Psoas muscle (tissue), 8 donors: ENCODE measurements at regions of chr1 and their contacts with region 1.

Region 1: GRCh38 chr1:19504796-19505692 is 19.7 kb upstream of the CAPZB start:
- DNase-seq: no peak
- ATAC-seq: peak in 3 of 4 donors; percentile 55 to 79 (median 64)
- H3K4me3 ChIP-seq: no peak overlapping the region
- H3K27ac ChIP-seq: peak overlapping the region; percentile 43
- H3K4me1 ChIP-seq: peaks cover 6% of the 10 kb centered on the region
- H3K27me3 ChIP-seq: no peaks in the 10 kb centered on the region
- CTCF ChIP-seq: no peak

Region 2: DNA sequence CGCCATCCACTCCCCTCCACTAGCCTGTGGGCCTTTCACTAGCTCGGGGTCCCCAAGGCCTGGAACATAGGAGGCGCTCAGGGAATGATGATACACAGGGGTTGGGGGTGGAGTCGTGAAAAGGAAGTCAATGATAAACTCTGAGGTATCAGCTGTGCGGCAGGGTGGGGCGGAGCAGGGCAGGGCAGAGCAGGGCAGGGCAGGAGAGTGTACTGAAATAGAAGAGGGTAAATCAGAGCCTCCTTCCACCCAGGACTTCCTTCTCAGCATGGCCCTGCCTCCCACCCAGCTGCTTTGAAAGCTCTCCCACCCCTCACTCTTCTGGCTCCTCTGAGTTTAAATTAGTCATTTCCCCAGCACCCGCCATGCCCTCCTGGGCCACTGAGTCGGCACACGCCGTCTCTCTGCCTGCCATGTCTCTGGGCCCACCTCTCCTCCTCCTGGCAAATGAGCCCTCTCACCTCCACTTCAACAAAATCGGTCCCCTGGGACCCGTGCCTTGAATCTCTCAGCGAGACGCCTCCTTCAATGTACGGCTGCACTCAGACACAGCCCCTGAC is 36.6 kb before region 1 on chr1:
- intact Hi-C with region 1: no loop called
- DNase-seq: no peak
- ATAC-seq: peak; percentile 33 to 54 (median 46)
- H3K4me3 ChIP-seq: peak overlapping the region; percentile 2
- H3K27ac ChIP-seq: peak overlapping the region; percentile 38
- H3K4me1 ChIP-seq: peaks cover 54% of the 10 kb centered on the region
- H3K27me3 ChIP-seq: no peaks in the 10 kb centered on the region
- CTCF ChIP-seq: no peak

Region 3: DNA sequence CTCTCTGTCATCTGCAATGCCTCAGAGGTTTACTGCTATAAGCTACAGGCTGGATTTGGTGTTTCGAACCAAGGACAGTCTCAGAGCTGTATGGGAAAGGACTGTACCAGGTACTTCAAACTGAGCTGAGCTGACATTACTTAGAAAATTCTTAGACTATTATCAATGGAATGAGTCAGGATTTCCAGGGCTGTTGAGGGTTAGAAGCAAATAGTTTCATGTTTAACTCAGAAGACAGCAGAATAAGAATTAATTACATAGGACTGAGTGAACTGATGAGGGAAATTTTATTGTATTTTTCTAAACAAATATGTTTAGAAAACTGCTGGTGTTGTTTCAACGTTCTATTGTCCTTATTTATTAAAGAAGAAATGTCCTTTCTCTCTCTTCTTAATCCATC is 54.6 kb after region 1 on chr1:
- intact Hi-C with region 1: loop called in 1 of 2 experiments (anchors 10 kb)
- DNase-seq: no peak
- ATAC-seq: no peak
- H3K4me3 ChIP-seq: no peak overlapping the region
- H3K27ac ChIP-seq: no peak overlapping the region
- H3K4me1 ChIP-seq: peaks cover 9% of the 10 kb centered on the region
- H3K27me3 ChIP-seq: peaks cover 0 to 2% (median 0%) of the 10 kb centered on the region in 3 donors
- CTCF ChIP-seq: no peak

Region 4: GRCh38 chr1:19728413-19729145 is 223.5 kb after region 1 on chr1:
- intact Hi-C with region 1: no loop called
- DNase-seq: no peak
- ATAC-seq: peak; percentile 48 to 80 (median 67)
- H3K4me3 ChIP-seq: no peak overlapping the region
- H3K27ac ChIP-seq: no peak overlapping the region
- H3K4me1 ChIP-seq: no peaks in the 10 kb centered on the region
- H3K27me3 ChIP-seq: no peaks in the 10 kb centered on the region
- CTCF ChIP-seq: no peak